Activated CD4-positive, alpha-beta T cell treated with anti-CD3 and anti-CD28 coated beads for 36 hours (primary cell): ENCODE measurements at regions of chr2 and their contacts with region 1.

Region 1: GRCh38 chr2:31324000-31324633 is 90.2 kb downstream of the EHD3 start:
- DNase-seq: no peak
- ATAC-seq: peak; percentile 70
- H3K4me3 Mint-ChIP-seq: peak overlapping the region; percentile 6
- H3K27ac Mint-ChIP-seq: peak overlapping the region; percentile 52
- H3K4me1 Mint-ChIP-seq: peaks cover 43% of the 10 kb centered on the region
- H3K27me3 Mint-ChIP-seq: no peaks in the 10 kb centered on the region

Region 2: GRCh38 chr2:31138037-31138962 is 185.8 kb before region 1 on chr2 and contains the start of gene GALNT14:
- CTCF ChIA-PET with region 1: no interaction called
- POLR2A ChIA-PET with region 1: no interaction called
- intact Hi-C with region 1: loop called in 1 of 2 experiments (anchors 2 kb)
- DNase-seq: peak; percentile 74
- ATAC-seq: peak; percentile 79
- H3K4me3 Mint-ChIP-seq: peak within 1 kb of the TSS; percentile 64
- H3K27ac Mint-ChIP-seq: no peak within 1 kb of the TSS
- H3K4me1 Mint-ChIP-seq: peaks cover 7% of the 10 kb centered on the region
- H3K27me3 Mint-ChIP-seq: peaks cover 31% of the 10 kb centered on the region
- total RNA-seq, gene GALNT14: 0.48 to 0.83 TPM

Region 3: DNA sequence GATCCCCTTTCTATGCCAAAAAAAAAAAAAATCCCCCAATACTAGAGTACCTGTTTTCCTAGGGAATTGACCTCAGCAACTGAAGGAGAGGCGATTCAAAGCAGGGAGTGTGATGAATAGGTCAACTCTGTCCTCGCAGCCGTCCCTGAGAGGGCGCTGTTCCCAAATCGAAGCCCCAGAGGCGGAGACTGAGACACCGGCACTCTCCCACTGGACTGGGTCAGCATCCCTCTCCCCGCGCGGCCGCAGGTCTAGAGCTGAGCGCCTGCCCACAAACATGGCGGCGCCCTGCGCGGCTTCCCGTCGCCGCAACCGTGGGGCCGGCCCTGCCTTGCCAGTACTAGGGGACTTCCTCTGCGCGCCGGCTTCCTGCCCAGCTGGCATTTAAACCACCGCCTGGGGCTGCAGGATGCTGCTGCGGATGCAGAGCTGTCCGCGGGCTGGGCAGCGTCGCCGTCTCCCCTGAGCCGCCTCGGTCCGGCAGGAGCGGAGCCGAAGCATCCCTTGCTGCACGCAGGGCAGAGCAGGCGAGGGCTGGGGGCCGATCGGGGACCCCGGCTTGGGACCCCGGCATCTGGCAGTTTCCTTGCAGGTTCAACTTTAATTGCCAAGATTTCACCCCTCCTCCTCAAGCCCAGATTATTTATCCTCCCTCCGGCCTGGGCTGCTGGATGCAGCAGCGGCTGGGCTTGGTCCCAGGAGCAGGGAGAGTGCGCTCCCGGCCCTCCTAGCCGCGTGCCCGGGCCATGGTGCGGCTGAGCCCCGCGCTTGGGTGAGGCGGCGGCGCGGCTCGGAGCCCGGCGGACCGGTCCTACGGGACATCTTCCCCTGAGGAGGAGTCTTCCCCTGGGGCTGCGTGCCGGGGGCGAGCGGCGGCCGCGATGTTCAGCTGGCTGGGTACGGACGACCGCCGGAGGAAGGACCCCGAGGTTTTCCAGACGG is 90.1 kb before region 1 on chr2 and contains the start of gene EHD3:
- CTCF ChIA-PET with region 1: no interaction called
- POLR2A ChIA-PET with region 1: no interaction called
- intact Hi-C with region 1: loop called in 1 of 2 experiments (anchors 2 kb)
- DNase-seq: peak; percentile 90
- ATAC-seq: peak; percentile 99
- H3K4me3 Mint-ChIP-seq: peak within 1 kb of the TSS; percentile 70
- H3K27ac Mint-ChIP-seq: peak within 1 kb of the TSS; percentile 34
- H3K4me1 Mint-ChIP-seq: peaks cover 19% of the 10 kb centered on the region
- H3K27me3 Mint-ChIP-seq: no peaks in the 10 kb centered on the region
- total RNA-seq, gene EHD3: 1.4 to 1.6 TPM

Region 4: GRCh38 chr2:31297751-31298150 is 26.4 kb before region 1 on chr2:
- CTCF ChIA-PET with region 1: interaction called, 4 read pairs
- POLR2A ChIA-PET with region 1: no interaction called
- intact Hi-C with region 1: loop called (anchors 1 kb)
- DNase-seq: peak; percentile 24
- ATAC-seq: peak; percentile 97
- H3K4me3 Mint-ChIP-seq: no peak overlapping the region
- H3K27ac Mint-ChIP-seq: no peak overlapping the region
- H3K4me1 Mint-ChIP-seq: peaks cover 4% of the 10 kb centered on the region
- H3K27me3 Mint-ChIP-seq: no peaks in the 10 kb centered on the region

Region 5: DNA sequence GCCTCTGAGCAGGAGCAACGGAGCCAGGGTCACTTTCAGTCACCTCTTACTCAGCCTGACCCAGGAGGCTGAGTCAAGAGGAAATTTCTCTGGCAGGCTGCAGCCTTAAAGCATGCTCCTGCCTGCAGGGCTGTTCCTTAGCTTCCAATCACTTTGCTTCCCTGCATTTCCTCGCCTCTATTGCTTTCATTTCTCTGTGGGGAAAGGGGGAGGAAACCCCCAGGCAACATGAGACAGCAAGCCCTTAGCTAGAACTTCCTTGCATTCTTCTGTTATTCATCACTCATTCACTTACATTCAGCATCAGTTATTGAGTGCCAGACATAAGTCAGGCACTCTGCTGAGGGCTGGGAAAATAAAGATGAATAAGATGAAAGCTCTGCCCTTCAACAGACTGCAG is 77.5 kb after region 1 on chr2:
- CTCF ChIA-PET with region 1: no interaction called
- POLR2A ChIA-PET with region 1: no interaction called
- intact Hi-C with region 1: no loop called
- DNase-seq: no peak
- ATAC-seq: no peak
- H3K4me3 Mint-ChIP-seq: no peak overlapping the region
- H3K27ac Mint-ChIP-seq: no peak overlapping the region
- H3K4me1 Mint-ChIP-seq: no peaks in the 10 kb centered on the region
- H3K27me3 Mint-ChIP-seq: peaks cover 4% of the 10 kb centered on the region